IMR-90 (cell line): ENCODE measurements at regions of chr13 and their contacts with region 1.

Region 1: DNA sequence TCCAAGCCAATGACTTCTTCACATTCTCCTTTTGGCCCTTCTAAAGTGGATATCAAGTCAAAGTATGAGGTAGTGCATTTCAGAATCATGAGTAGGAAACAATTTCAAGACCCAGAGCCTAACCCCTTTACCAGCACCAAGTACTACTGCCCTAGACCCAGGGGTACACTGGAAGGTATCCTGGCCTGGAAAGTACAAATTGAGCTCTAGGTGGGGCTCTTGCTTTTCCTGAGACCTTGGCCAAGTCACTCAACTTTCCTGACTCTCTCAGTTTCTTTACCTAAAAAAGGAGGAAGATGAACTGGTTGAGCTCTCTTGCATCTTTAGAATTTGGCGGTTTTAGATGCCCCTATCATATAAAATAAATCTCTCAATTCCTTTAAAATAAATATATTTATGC is 204.7 kb downstream of the FGF14 start:
- DNase-seq: peak; percentile 8
- ATAC-seq: no peak
- H3K4me3 ChIP-seq: no peak overlapping the region
- H3K27ac ChIP-seq: no peak overlapping the region
- H3K4me1 ChIP-seq: peaks cover 4% of the 10 kb centered on the region; the same call in 1 of the 2 replicates
- H3K27me3 ChIP-seq: no peaks in the 10 kb centered on the region
- CTCF ChIP-seq: peak; percentile 23
- POLR2A ChIP-seq: no peak
- RAD21 ChIP-seq: peak; percentile 32; the same call in 1 of the 2 replicates

Region 2: DNA sequence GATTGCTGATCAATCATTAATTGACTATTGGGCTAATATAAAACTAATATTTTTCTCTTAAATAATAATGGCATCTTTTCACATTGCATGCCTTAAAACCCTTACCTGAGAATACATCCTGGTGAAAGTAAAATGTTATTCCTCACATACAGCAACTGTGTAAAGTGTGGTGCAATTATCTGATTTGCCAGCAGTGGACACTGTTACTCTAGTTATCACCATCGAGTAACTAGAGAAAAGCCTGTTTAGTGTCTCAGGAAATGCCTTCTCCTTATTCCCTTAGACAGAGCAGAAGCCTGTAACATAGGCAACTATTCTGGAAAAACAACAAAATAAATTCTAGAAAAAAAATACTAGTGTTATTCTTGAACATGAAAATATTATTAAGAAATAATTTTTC is 255.2 kb before region 1 on chr13:
- CTCF ChIA-PET with region 1: no interaction called
- POLR2A ChIA-PET with region 1: no interaction called
- dilution Hi-C with region 1: no loop called
- in situ Hi-C with region 1: no loop called
- intact Hi-C with region 1: loop called (anchors 1 kb)
- DNase-seq: peak; percentile 16
- ATAC-seq: peak; percentile 77; the same call in 1 of the 2 replicates
- H3K4me3 ChIP-seq: no peak overlapping the region
- H3K27ac ChIP-seq: no peak overlapping the region
- H3K4me1 ChIP-seq: no peaks in the 10 kb centered on the region
- H3K27me3 ChIP-seq: no peaks in the 10 kb centered on the region
- CTCF ChIP-seq: peak; percentile 56
- POLR2A ChIP-seq: no peak
- RAD21 ChIP-seq: peak; percentile 55